Motor neuron (in vitro differentiated cells): ENCODE measurements at regions of chr16 and their contacts with region 1.

Region 1: DNA sequence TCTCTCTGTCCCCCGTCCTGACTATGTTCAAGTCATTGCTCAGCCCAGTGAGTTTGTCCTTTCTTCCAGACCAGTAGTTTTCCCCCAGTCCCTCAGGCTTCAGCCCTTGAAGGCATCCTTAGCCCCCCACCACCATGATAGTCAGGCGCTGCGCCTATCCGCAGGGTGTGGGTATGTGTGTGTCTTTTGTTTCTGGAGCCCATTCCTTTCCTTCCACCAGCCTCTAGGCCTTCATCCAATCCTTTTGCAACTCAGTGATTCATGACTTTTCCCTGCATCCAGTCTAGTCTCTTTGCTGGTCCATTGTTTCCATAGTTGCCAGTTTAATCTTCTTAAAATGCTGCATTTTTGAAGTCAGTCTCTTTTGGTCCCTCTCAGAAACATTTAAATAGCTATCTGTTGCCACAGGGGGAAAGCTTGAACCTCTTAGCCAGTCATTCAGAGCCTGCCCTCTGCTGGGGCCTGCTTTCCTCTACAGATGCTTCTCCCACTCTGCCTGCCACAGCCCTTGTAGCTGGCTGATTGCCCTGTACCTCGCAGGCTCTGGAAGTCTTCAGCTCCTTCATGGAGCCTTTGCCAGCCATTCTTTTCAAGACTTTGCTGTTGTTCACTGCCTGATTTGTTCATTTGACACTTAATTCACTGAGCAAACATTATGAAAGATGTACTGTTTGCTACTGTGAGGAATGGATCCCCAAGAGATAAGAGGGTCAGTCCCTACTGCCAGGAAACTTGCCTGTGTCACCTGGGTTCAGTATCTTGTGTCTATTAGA is 55.9 kb upstream of the ADCY7 start:
- ATAC-seq: peak; percentile 75 to 99 (median 96)
- H3K4me3 ChIP-seq: no peak overlapping the region
- H3K27ac ChIP-seq: no peak overlapping the region
- H3K4me1 ChIP-seq: peaks cover 3 to 9% of the 10 kb centered on the region in 2 donors

Region 2: DNA sequence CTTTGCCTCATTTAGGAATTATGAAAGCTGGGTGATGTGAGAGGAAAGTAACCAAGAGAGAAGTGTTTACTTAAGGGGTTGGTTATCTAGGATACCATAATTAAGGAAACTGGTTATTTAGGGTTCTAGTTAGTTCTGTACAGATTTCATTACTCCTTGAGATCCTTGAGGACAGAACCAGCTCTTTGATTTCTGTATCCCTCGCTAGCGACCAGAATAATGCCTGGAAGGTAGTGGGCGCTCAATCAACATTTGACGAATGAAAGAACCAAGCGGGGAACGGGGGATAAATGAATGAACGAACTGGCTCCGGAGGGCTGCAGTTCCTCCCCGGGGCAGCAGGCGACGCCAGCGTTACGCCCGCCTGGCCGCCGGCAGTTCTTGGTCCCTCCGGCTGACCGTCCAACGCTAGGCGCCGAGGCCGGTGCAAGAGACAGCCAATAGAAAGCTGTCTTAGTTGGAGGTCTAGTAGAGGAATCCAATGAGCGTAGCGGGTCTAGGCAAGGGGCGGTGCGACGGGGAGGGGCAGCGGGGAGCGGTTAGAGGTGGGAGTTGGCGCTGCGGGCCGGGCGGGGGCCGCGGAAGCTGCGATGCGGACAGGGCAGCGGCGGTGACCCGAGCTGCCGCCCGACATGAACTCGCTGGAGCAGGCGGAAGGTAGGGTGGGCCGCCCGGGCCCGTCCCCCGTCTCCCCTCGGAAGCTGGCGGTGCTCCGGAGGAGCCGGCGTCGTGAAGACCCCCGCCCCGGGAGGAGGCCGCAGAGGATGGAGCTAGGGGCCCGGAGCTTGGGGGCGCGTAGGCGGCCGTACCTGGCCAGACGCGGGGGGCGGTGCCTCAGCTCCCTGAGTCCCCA is 185.5 kb before region 1 on chr16 and contains the start of gene CNEP1R1:
- in situ Hi-C with region 1: loop called in 1 of 9 experiments (anchors 25 kb)
- ATAC-seq: peak; percentile 97 to 99 (median 98)
- H3K4me3 ChIP-seq: peak within 1 kb of the TSS; percentile 72 to 87 (median 81)
- H3K27ac ChIP-seq: peak within 1 kb of the TSS; percentile 72 to 85
- H3K4me1 ChIP-seq: peaks cover 9% of the 10 kb centered on the region in 2 donors
- total RNA-seq, gene CNEP1R1: 13.2 to 23.1 (median 14.7) TPM

Region 3: GRCh38 chr16:50102051-50102746 is 108.3 kb before region 1 on chr16:
- in situ Hi-C with region 1: loop called in 1 of 9 experiments (anchors 25 kb)
- ATAC-seq: peak in 2 of 8 experiments; percentile 98 to 99
- H3K4me3 ChIP-seq: no peak overlapping the region
- H3K27ac ChIP-seq: no peak overlapping the region
- H3K4me1 ChIP-seq: no peaks in the 10 kb centered on the region

Region 4: DNA sequence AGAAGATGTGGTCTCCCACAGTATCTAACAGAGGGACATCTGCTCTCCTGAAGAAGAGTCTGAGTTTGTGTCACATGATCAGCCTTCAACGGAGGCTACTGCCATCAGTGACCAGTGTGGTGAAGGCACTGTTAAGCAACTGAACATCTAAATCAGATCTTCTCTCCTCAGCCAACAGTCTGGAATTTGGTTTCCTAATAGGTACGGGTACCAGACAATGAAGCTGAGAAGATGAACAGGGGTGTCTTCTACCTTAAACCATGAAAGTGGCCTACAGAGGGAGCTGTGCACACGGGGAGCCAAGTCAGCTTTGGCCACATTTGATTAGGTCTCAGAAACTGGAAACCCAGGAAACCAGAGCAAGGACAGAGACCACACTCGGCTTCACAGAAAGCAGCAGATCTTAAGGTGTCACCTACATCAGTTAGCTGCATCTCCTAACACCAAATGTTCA is 116.5 kb after region 1 on chr16:
- in situ Hi-C with region 1: no loop called
- ATAC-seq: peak in 4 of 8 experiments; percentile 31 to 79 (median 75)
- H3K4me3 ChIP-seq: no peak overlapping the region
- H3K27ac ChIP-seq: no peak overlapping the region
- H3K4me1 ChIP-seq: peaks cover 10 to 11% of the 10 kb centered on the region in 2 donors

Region 5: DNA sequence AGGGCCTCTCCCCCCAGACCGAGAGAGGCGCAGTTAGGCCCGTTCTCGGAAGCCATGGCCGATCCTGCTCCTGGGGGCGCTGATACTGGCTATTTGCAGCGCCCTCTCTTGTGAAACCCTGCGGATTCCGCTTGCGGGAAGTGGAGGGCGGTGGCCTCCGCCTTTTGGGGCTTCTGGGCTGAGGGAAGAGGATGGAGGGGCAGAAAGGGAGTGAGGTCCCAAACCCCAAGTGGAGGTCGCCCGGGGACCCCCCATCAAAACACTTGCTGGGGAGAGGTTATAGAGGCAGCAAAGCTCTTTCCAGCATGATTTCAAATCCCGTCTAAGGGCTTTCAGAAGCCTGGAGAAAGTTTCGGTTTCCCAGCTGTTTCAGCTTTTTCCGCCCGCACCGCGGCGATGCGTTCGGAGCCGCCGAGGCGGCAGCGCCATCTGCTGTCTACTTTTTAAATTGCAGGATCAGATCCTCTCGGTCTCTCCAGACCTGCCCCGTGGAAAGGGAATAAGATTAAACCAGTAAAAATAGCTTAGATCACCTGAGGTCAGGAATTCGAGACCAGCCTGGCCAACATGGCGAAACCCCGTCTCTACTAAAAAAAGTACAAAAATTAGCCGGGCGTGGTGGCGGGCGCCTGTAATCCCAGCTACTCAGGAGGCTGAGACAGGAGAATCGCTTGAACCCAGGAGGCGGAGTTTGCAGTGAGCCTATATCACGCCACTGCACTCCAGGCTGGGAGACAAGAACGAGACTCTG is 454.9 kb after region 1 on chr16:
- in situ Hi-C with region 1: loop called in 1 of 9 experiments (anchors 25 kb)
- ATAC-seq: peak; percentile 57 to 97 (median 75)
- H3K4me3 ChIP-seq: no peak overlapping the region
- H3K27ac ChIP-seq: no peak overlapping the region
- H3K4me1 ChIP-seq: peaks cover 0 to 9% of the 10 kb centered on the region in 2 donors

Region 6: GRCh38 chr16:51321251-51321650 is 1110.8 kb after region 1 on chr16:
- in situ Hi-C with region 1: no loop called
- ATAC-seq: no peak
- H3K4me3 ChIP-seq: no peak overlapping the region
- H3K27ac ChIP-seq: no peak overlapping the region
- H3K4me1 ChIP-seq: peaks cover 15 to 17% of the 10 kb centered on the region in 2 donors